Posterior cingulate gyrus (tissue), 11 donors: ENCODE measurements at regions of chr15 and their contacts with region 1.

Region 1: GRCh38 chr15:78241007-78241406 is 6.6 kb upstream of the ACSBG1 start:
- DNase-seq: peak; percentile 75 to 98 (median 92)

Region 2: DNA sequence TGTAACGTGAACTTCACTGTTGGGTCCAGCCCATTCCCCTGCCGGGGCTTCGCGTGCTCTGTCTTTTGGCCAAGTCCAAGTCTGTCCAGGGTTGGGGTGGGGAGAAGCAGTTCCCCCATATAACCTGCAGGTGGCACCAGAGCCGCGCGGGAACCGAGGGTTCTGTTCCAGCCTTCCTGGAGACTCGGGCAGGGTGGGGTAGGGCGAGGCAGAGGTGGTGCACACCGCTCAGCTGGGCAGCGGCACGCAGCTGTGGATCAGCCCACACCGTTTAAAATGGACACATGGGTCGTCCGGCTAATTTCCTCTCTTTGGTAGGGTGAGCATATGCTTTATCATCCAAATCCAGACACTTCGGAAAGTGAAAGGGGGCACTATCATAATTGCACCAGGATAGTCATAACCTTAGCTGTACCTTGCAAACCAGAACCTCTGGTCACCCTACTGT is 281.6 kb before region 1 on chr15:
- intact Hi-C with region 1: loop called (anchors 2 kb)
- DNase-seq: peak; percentile 62 to 96 (median 82)

Region 3: DNA sequence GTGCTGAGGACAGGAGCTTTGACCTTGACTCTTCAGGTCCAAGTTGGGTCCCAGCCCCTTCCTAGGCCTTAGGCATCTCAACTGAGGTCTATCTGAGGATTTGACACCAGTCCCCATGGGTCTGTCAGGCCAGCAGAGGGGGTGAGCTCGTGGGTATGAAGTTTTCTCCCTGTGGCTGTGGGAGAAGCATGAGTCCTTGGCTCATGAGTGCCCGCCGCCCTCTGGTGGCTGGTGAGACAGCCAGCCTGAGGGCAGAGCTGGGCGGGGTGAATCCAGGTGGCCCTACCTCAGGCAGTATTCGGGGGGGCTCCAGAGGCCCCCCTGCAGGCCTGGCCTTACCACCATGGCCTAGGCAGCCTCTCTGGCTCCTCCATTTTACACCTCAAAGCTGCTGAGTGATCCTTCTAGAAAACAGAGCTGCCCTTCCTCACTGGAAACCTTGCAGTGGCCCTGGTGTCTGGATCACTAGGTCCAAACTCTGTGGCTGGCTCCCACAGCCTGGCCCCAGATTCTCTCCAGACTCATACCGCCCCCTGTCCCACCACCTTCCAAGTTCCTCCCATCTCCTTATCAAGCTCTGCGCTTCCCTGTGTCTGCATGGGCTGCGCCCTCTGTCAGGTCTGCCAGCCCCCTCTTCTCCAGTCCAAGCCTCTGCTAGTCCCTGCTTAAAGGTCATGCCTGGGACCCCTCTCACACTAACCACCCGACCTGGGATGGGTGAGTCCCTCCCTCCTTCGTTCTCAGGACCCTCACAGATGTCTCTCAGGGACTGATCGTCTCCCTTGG is 132.5 kb before region 1 on chr15:
- intact Hi-C with region 1: loop called (anchors 1 kb)
- DNase-seq: peak; percentile 49 to 96 (median 80)

Region 4: GRCh38 chr15:78131295-78132061 is 109.5 kb before region 1 on chr15 and contains the start of gene CIB2:
- intact Hi-C with region 1: loop called (anchors 5 kb)
- DNase-seq: peak; percentile 27 to 94 (median 53)

Region 5: DNA sequence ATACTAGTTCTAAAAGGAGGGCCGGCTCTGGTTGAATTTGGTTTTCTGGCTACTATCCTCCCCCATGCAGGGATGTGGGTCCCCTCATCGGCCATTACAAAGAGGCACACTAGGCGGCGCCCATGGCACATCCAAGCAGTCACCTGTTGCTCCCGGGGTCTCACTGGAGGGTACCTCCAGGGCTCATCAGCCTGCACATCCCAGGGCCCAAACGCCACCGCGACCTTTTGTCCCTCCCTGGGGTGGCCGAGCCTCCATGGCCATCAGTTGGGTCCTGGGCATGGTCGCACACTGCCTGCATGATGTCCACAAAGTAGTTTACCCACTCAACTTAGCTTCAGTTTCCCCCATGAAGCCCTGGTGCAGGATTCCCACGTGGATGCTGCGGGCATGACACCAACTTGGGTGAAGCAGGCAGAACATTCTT is 63.5 kb before region 1 on chr15:
- intact Hi-C with region 1: loop called (anchors 1 kb)
- DNase-seq: peak in 7 of 10 donors; percentile 36 to 92 (median 72)